Gastrocnemius medialis (tissue), 4 donors: ENCODE measurements at regions of chr4 and their contacts with region 1.

Region 1: DNA sequence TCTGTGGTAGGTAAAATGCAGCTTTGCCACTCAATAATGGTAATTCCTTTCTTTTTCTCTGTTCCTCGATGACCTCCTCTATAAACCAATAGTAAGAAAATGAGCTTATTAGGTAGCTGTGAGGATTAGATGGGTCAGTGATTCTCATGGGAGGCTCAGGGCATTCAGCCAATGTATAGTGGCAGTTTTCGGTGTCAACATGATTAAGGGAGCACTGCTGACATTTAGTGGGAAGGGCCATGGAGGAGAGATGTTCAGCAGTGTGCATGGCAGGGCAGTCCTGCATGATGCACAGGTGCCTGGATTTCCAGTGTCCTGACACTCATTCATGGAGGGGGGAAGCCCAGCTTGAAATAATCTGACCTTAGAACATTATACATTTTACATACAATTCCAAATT is 232.8 kb downstream of the PDGFC start:
- DNase-seq: no peak
- ATAC-seq: no peak
- H3K4me3 ChIP-seq: no peak overlapping the region
- H3K27ac ChIP-seq: no peak overlapping the region
- H3K4me1 ChIP-seq: no peaks in the 10 kb centered on the region
- H3K27me3 ChIP-seq: no peaks in the 10 kb centered on the region
- CTCF ChIP-seq: no peak
- POLR2A ChIP-seq: no peak

Region 2: GRCh38 chr4:156710365-156711190 is 28.2 kb before region 1 on chr4:
- in situ Hi-C with region 1: no loop called
- intact Hi-C with region 1: loop called (anchors 1 kb)
- DNase-seq: no peak
- ATAC-seq: no peak
- H3K4me3 ChIP-seq: no peak overlapping the region
- H3K27ac ChIP-seq: no peak overlapping the region
- H3K4me1 ChIP-seq: no peaks in the 10 kb centered on the region
- H3K27me3 ChIP-seq: no peaks in the 10 kb centered on the region
- CTCF ChIP-seq: no peak
- POLR2A ChIP-seq: no peak